ENCODE measurements at regions of chr16 and their contacts with region 1.

Region 1: DNA sequence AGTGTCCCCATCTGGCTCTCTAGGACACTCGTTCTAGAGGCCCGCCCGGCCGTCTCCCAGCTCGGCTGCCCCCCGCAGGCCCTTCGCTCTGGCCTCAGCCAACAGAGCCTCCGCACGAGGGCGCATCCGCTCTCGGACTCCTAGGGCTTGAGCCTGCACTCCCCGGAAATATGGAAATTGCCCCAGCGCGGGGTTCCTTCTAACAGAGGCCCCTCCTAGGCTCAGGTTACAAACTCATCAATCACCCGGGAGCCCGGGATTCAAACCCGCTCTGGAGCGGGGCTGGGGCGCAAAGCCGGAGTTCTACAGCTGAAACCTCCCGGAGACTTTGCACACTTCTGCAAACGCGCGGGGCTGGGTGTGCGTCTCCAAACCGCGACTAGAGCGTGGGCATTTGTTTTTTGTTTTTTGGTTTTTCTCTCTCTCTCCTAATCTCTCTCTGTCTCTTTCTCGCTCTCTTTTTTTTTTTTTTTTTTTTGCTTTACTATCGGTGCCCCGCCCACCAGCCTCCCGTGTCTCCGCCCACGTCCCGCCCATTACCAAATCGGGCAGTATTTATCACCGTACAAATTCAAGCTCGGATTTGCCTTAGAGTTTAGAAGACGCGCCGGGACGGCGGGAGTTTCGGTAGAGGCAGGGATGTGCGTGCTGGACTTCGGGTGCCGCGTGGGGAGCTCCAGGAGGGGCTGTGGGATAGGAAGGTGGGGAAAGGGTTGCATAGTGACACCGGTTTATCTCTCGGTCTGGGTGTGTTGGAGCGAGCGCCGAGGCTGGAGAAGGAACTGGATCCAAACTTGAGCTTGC is 2.4 kb upstream of the FOXL1 start:
- DNase-seq: peak; percentile 91
- ATAC-seq: peak; percentile 91

Region 2: GRCh38 chr16:86685076-86685475 is 109.1 kb after region 1 on chr16:
- intact Hi-C with region 1: no loop called
- DNase-seq: no peak
- ATAC-seq: no peak

Region 3: DNA sequence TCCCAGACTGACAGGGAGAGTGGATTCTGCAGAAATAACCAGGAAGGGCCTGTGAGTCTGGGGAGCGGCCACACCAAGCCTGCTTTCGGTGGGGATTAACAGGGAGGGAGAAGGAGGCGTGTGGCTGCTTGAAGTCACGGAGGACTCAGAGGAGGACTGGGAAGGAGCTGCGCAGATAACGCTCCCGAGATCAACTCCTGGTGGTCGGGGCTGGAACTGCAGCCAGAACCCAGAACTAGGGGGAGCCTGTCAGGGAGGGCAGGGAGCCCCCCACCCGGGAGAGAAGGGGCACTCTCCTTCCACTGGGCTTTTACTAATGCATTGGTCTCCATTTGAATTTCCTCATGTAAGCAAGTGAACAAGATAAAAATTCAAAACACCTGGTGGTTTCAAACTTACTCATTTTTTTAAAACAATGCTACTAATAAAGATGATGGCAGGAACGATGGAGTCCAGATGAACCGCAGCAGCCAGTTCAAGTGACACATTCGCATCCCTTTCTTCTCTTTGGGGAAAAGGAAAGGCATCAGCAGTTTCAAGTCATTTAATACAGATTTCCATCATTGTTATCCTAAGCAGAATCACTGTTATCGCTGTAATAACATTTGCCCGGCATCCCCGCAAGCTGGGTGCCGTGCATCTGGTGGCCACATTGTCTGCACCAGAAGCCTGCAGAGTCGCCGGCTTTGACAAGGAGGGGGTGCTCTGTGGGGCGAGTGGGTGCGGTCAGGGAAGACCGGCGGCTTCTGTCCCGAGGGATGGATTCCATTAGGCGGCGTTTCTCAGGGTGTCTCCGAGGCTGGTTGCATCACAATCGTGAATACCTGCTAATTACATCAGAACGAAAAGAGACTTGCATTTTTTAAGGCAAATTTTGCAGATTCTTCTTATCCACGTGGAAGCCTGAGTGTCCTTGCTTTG is 185.4 kb after region 1 on chr16:
- intact Hi-C with region 1: loop called (anchors 10 kb)
- DNase-seq: peak; percentile 77
- ATAC-seq: peak; percentile 84

Region 4: DNA sequence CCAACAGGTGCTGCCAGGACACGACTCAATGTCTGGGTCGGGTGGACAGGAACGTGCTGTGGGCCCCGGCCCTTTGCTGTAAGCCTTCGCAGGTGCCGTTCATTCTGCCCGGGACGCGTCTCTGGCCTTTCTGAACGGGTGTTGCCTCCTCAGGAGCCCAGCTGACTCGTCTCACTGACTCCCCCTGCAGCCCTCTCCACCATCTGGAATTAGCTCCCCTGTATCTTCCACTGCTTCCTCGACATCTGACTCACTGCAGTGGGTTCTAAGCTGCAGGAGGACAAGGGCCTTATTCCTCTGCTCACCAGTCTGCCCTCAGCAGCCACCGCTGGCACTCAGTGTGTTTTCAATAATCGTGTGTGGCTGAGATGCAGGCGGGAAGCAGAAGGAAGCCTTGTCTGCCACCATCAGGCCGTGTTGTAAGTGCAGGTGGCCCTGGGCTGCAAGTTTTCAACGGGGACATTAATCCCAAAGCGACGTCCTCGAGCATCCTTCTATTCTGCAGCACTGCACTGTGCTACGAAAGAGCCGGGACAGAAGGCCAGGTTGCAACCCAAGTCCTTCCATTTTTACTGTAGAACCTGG is 258.6 kb after region 1 on chr16:
- intact Hi-C with region 1: loop called (anchors 10 kb)
- DNase-seq: no peak
- ATAC-seq: no peak